Breast epithelium (tissue), 4 donors: ENCODE measurements at regions of chr5 and their contacts with region 1.

Region 1: GRCh38 chr5:10595678-10596309 is 31.9 kb downstream of the ANKRD33B start:
- DNase-seq: peak in 1 of 2 donors; percentile 46
- H3K4me3 ChIP-seq: peak overlapping the region in 2 of 3 donors; percentile 32 to 58
- H3K27ac ChIP-seq: peak overlapping the region; percentile 89 to 96
- H3K4me1 ChIP-seq: peaks cover 3 to 4% of the 10 kb centered on the region in 2 donors
- H3K27me3 ChIP-seq: no peaks in the 10 kb centered on the region
- CTCF ChIP-seq: no peak
- POLR2A ChIP-seq: no peak

Region 2: DNA sequence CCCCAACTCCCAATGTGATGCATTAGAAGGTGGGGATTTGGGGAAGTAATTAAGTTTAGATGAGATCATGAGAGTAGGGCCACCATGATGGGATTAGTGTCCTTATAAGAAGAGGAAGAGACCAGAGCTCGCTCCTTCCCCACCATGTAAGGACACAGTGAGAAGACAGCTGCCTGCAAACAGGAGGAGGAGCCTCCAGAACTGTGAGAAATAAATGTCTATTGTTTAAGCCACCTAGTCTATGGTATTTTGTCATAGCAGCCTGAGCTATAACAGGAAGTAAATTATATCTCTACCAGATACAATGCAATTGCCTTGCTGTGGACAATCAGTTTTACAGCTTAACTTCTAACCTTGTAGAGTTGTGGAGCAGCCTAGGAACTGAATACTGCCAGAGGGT is 26.0 kb after region 1 on chr5:
- intact Hi-C with region 1: no loop called
- DNase-seq: no peak
- H3K4me3 ChIP-seq: no peak overlapping the region
- H3K27ac ChIP-seq: no peak overlapping the region
- H3K4me1 ChIP-seq: no peaks in the 10 kb centered on the region
- H3K27me3 ChIP-seq: no peaks in the 10 kb centered on the region
- CTCF ChIP-seq: no peak
- POLR2A ChIP-seq: no peak

Region 3: DNA sequence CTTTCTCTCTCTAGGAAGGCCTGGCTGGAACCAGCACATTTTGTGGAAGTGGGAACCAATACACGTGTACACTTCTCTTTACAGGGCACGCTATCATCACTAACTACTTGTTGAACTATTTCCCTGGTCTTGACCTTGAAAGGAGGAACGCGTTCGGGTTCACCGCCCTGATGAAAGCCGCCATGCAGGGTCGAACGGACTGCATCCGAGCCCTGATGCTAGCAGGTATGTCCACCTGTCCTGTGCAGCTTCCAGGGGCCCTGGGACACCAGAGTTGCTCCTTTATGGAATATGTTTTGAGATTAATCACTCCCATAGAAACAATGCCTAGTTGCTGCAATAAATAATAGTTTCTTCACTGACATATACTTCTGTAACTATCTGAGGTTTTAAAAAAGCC is 42.1 kb after region 1 on chr5:
- intact Hi-C with region 1: loop called (anchors 2 kb)
- DNase-seq: no peak
- H3K4me3 ChIP-seq: no peak overlapping the region
- H3K27ac ChIP-seq: no peak overlapping the region
- H3K4me1 ChIP-seq: no peaks in the 10 kb centered on the region
- H3K27me3 ChIP-seq: no peaks in the 10 kb centered on the region
- CTCF ChIP-seq: no peak
- POLR2A ChIP-seq: no peak